Aorta (tissue), 5 donors: ENCODE measurements at regions of chr15 and their contacts with region 1.

Region 1: GRCh38 chr15:51955504-51956101 is 16.0 kb downstream of the LEO1 start:
- DNase-seq: no peak
- ATAC-seq: no peak
- H3K4me3 ChIP-seq: no peak overlapping the region
- H3K27ac ChIP-seq: no peak overlapping the region
- H3K4me1 ChIP-seq: no peaks in the 10 kb centered on the region
- H3K27me3 ChIP-seq: no peaks in the 10 kb centered on the region

Region 2: DNA sequence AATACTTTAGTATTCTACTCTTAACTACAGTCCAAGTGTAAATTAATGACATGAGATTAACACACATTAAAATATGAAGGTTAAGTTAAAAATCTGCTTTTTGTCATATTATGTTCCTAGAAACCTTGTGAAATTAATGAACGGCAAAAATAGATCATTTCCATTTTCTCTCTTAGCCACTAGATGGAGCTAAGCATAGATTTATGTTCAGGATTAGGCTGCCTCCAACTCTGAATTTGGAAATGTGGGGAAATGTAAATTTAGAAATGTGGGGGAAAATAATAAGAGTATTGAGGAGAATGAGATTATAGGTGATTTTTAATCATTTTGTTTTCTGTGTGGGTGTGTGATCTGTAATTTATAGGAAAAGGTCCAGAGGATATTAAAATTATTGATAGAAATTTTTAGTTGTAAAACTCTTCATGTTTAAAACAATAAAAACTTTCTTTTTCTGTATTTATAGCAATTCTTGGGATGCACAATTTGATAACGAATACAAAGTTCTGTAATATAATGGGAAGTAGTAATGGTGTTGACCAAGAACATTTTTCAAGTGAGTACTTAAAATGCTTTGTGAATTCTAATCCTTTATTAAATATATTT is 66.9 kb before region 1 on chr15:
- intact Hi-C with region 1: no loop called
- DNase-seq: no peak
- ATAC-seq: no peak
- H3K4me3 ChIP-seq: no peak overlapping the region
- H3K27ac ChIP-seq: no peak overlapping the region
- H3K4me1 ChIP-seq: no peaks in the 10 kb centered on the region
- H3K27me3 ChIP-seq: no peaks in the 10 kb centered on the region

Region 3: DNA sequence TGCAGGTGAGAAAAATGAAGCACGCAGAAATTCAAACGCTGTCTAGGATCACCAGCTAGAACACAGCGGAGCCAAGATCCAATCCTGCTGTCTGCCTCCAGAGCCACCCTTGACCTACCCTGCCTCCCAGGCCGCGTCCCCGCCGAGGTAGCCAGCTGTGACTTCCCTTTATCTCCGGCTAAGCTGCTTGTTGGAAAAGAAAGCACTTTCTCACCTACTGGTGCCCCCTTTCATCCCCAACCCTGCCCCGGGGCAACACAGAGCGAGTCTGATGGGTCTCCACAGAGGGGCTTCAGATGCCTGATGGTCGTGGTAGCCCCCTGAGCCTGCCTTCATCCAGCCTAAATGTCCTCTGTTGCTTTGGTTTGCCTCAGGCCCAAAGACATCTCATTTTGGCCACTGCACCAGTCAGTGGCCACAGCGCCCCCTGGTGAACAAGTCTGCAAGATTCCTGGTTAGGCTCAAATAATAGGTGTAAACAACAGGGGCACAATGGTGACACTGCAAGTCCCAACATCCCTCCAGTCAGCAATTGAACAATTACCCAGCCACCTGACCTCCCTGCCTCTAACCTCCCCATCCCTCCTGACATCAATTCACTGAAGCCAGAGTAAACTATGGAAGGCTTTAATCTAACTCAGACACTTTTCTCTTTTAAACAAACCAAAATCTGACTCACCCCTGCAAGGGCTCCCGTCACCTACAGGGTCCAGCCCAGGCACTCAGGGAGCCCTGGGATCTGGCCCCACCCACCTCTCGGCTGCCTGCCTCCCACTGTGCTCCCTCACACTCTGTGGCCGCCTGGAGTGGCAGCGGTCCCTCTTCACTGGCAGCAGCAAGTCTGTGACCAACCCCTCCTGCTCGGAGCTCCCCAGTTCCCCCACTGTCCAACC is 184.2 kb after region 1 on chr15:
- intact Hi-C with region 1: loop called in 1 of 2 experiments (anchors 10 kb)
- DNase-seq: peak; percentile 82 to 91
- ATAC-seq: peak; percentile 68
- H3K4me3 ChIP-seq: no peak overlapping the region
- H3K27ac ChIP-seq: no peak overlapping the region
- H3K4me1 ChIP-seq: no peaks in the 10 kb centered on the region
- H3K27me3 ChIP-seq: no peaks in the 10 kb centered on the region